H1 (cell line): ENCODE measurements at regions of chr12 and their contacts with region 1.

Region 1: GRCh38 chr12:106357549-106358395 is at the start of gene POLR3B:
- DNase-seq: peak; percentile 81 to 94
- H3K4me3 ChIP-seq: peak within 1 kb of the TSS; percentile 64 to 91 (median 84)
- H3K27ac ChIP-seq: peak within 1 kb of the TSS; percentile 90
- H3K4me1 ChIP-seq: peaks cover 0 to 3% (median under 1%) of the 10 kb centered on the region in 4 experiments; a peak in 4 of 7 replicates
- H3K27me3 ChIP-seq: no peaks in the 10 kb centered on the region
- CTCF ChIP-seq: peak; percentile 86 to 89 (median 87)
- EP300 ChIP-seq: 0 out of 3 replicates have a peak, but pooled peaks of 1 of the 2 experiments have one; percentile 32
- POLR2A ChIP-seq: peak in 1 of 2 experiments; percentile 77; a peak in 2 of 3 replicates
- RAD21 ChIP-seq: peak; percentile 85
- total RNA-seq, gene POLR3B: 13.0 and 13.2 TPM in 2 replicates

Region 2: DNA sequence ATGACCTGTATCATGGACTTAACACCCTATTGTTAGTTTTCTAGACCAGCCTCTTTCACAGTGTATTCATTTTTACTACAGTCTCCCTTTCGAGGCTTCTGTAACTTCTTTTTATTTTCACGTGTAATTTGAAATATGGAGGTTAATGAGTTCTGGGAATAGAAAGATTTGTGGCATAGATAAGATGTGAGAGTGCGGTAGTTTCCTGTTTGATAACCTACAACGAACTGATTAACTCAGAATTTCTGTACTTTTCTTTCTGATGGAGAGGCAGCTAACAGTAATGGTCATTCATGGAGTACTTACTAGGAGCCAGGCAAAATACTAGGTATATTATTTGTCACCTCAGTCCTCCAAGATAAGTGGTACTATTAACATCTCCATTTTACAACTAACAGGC is 21.0 kb after region 1 on chr12:
- CTCF ChIA-PET with region 1: interaction called, 10 read pairs
- POLR2A ChIA-PET with region 1: interaction called, 3 read pairs
- DNase-seq: no peak
- H3K4me3 ChIP-seq: no peak overlapping the region
- H3K27ac ChIP-seq: no peak overlapping the region
- H3K4me1 ChIP-seq: no peaks in the 10 kb centered on the region
- H3K27me3 ChIP-seq: no peaks in the 10 kb centered on the region
- CTCF ChIP-seq: no peak
- EP300 ChIP-seq: no peak
- POLR2A ChIP-seq: no peak
- RAD21 ChIP-seq: no peak